Activated CD4-positive, alpha-beta T cell treated with anti-CD3 and anti-CD28 coated beads for 36 hours (primary cell): ENCODE measurements at regions of chr5 and their contacts with region 1.

Region 1: DNA sequence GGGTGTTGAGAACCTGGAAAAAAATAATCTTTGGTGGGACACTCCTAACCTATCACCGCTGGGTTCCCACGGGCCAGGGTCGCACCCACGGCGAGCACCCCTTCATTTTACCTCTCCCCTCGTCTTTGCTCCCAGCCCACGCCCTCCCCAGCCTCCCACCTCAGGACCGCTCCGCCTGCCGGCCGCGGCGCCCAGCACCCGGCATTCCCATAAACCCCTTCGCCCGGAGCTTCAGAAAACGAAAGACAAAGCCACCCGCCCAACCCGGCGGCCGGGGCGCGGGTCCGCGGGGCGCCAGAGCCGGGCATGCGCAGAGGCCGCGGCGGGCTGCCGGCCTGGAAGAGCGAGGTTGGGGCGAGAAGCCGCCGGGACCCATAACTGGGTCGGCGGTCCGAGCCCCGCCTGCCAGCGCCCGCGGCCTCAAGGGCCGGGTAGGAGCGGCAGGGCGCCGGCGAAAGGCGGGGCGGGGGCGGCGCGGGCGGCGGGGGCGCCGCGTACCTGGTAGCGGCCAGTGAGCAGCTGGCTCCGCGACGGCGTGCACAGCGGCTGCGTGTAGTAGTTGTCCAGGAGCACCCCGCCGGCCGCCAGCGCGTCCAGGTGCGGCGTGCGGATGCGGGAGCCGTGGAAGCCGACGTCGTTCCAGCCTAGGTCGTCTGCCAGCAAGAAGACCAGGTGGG is 533 bp downstream of the ARSB start:
- DNase-seq: peak; percentile 86
- ATAC-seq: peak; percentile 72
- H3K4me3 Mint-ChIP-seq: peak overlapping the region; percentile 82
- H3K27ac Mint-ChIP-seq: peak overlapping the region; percentile 88
- H3K4me1 Mint-ChIP-seq: peaks cover 40% of the 10 kb centered on the region
- H3K27me3 Mint-ChIP-seq: no peaks in the 10 kb centered on the region

Region 2: GRCh38 chr5:77379558-77380061 is 1605.0 kb before region 1 on chr5:
- CTCF ChIA-PET with region 1: no interaction called
- POLR2A ChIA-PET with region 1: no interaction called
- intact Hi-C with region 1: loop called in 1 of 2 experiments (anchors 10 kb)
- DNase-seq: peak; percentile 78
- ATAC-seq: peak; percentile 95
- H3K4me3 Mint-ChIP-seq: no peak overlapping the region
- H3K27ac Mint-ChIP-seq: peak overlapping the region; percentile 55
- H3K4me1 Mint-ChIP-seq: peaks cover 31% of the 10 kb centered on the region
- H3K27me3 Mint-ChIP-seq: peaks cover 6% of the 10 kb centered on the region

Region 3: DNA sequence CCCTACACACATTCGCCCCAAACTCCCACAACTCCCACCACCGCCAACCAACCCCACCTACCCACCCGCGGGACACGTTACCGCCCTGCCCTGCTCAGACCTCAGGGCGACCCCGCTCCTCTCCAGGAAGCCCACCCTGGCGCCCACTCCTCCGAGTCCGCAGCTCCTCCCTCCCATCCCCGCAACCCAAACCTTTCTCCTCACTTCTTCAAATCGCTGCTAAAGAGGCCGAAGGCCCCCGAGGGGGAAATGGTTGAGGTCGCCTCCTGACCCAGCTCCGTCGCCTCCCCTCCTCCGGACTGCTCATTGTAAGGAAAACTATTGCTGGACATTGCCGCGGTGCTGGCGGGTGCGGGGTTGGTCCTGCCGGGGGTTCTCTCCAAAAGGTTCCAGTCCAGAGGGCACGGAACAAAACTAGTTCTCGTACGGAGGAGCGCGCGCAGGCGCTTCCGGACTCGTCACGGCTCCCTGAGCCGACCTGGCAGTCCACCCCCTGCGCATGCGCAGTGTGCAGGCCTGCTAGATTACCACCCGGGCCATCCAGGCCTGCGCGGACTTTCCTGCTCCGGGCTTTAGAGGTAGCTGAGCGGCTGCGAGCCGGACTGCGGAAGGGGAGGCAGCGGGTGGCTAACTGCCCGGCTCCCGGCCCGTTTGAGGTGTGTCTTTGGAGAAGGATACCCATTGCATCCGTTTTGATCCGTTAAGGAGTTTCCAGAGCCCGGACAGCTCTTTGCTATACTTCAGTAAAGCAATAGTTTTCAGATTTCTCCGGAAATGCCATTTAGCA is 690.1 kb before region 1 on chr5 and contains the start of gene AP3B1:
- CTCF ChIA-PET with region 1: no interaction called
- POLR2A ChIA-PET with region 1: no interaction called
- intact Hi-C with region 1: loop called in 1 of 2 experiments (anchors 1 kb)
- DNase-seq: peak; percentile 99
- ATAC-seq: peak; percentile 94
- H3K4me3 Mint-ChIP-seq: peak within 1 kb of the TSS; percentile 88
- H3K27ac Mint-ChIP-seq: peak within 1 kb of the TSS; percentile 99
- H3K4me1 Mint-ChIP-seq: peaks cover 33% of the 10 kb centered on the region
- H3K27me3 Mint-ChIP-seq: no peaks in the 10 kb centered on the region
- total RNA-seq, gene AP3B1: 41.2 to 55.7 TPM

Region 4: DNA sequence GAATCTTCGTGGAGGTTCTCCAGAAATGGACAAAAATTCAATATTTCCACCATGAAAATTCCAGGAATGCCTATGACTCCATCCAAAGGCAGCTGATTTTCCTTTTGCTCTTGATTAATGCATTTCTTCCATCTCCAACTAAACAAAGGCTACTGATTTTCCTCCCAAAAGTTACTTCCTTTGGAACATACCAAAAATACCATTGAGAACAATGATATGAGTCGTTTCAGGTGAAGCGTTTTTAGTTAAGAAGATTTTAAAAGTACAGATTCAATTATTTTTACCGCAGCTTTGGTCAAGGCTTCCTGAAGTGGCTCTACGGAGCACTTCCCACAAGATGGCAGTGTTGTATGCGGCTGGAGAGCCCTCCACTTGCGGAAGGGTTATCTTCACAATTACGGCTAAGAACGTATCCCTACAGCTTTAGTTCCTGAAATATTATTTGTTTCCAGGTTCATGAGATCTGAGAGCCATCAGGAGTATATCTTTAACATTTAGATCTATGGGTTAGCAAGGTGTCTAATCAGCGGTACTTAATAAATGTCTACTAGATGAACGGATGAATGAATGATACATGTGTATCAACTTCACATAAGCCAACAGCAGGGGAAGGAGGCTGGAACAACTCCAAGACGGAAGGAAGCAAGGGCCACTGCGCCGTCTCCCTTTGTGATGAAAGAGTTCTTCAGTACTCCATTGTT is 36.4 kb after region 1 on chr5:
- CTCF ChIA-PET with region 1: interaction called, 6 read pairs
- POLR2A ChIA-PET with region 1: interaction called, 5 read pairs
- intact Hi-C with region 1: loop called in 1 of 2 experiments (anchors 2 kb)
- DNase-seq: peak; percentile 70
- ATAC-seq: no peak
- H3K4me3 Mint-ChIP-seq: no peak overlapping the region
- H3K27ac Mint-ChIP-seq: no peak overlapping the region
- H3K4me1 Mint-ChIP-seq: peaks cover 2% of the 10 kb centered on the region
- H3K27me3 Mint-ChIP-seq: peaks cover 33% of the 10 kb centered on the region

Region 5: DNA sequence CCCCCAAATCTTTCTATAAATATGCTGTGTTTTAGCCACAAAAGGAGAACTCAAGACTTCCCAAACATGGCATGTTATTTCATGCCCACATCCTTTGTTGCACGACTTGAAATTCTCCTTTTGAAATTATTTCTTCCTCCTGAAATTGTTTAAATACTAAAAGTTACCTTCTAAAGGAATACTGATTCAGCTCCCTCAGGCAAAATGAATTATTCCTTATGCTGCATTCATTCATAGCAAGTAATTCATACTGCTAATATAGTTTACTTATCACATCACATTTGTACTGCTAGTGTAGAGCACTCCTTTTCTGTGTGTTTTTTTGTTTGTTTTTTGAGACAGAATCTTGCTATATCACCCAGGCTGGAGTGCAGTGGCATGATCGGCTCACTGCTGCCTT is 172.7 kb after region 1 on chr5:
- CTCF ChIA-PET with region 1: no interaction called
- POLR2A ChIA-PET with region 1: no interaction called
- intact Hi-C with region 1: no loop called
- DNase-seq: no peak
- ATAC-seq: no peak
- H3K4me3 Mint-ChIP-seq: no peak overlapping the region
- H3K27ac Mint-ChIP-seq: no peak overlapping the region
- H3K4me1 Mint-ChIP-seq: no peaks in the 10 kb centered on the region
- H3K27me3 Mint-ChIP-seq: no peaks in the 10 kb centered on the region

Region 6: GRCh38 chr5:79514391-79515105 is 530.0 kb after region 1 on chr5:
- CTCF ChIA-PET with region 1: no interaction called
- POLR2A ChIA-PET with region 1: no interaction called
- intact Hi-C with region 1: loop called (anchors 1 to 2 kb)
- DNase-seq: peak; percentile 94
- ATAC-seq: peak; percentile 82
- H3K4me3 Mint-ChIP-seq: peak overlapping the region; percentile 93
- H3K27ac Mint-ChIP-seq: peak overlapping the region; percentile 97
- H3K4me1 Mint-ChIP-seq: peaks cover 35% of the 10 kb centered on the region
- H3K27me3 Mint-ChIP-seq: peaks cover 15% of the 10 kb centered on the region

Region 7: DNA sequence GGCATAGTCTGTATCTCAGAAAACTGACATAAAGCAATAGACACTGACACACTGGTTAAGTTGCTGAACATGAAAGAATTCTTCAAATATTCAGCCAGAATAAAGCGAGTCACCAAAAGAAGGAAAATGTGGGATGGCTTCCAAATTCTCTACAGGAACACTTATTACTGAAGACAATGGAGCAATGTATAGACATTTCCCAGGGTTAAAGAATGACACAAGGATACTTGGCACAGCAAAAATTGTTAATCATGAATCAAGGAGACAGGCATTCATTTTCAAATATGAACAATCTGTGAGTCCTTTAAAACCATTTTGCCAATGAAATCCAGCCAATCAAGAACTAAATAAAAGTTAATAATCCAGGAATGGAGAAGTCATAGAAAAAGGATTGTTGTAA is 914.0 kb after region 1 on chr5:
- CTCF ChIA-PET with region 1: no interaction called
- POLR2A ChIA-PET with region 1: no interaction called
- intact Hi-C with region 1: no loop called
- DNase-seq: no peak
- ATAC-seq: no peak
- H3K4me3 Mint-ChIP-seq: no peak overlapping the region
- H3K27ac Mint-ChIP-seq: no peak overlapping the region
- H3K4me1 Mint-ChIP-seq: no peaks in the 10 kb centered on the region
- H3K27me3 Mint-ChIP-seq: peaks cover 37% of the 10 kb centered on the region